Panc1 (cell line): ENCODE measurements at regions of chrX and their contacts with region 1.

Region 1: GRCh38 chrX:131746474-131746968 is 202.6 kb downstream of the OR13H1 start:
- DNase-seq: peak; percentile 91
- ATAC-seq: peak; percentile 90
- H3K4me3 ChIP-seq: peak overlapping the region; percentile 69 to 97
- H3K27ac ChIP-seq: peak overlapping the region; percentile 99
- H3K4me1 ChIP-seq: peaks cover 7% of the 10 kb centered on the region; the same call in 1 of the 2 replicates
- H3K27me3 ChIP-seq: no peaks in the 10 kb centered on the region
- CTCF ChIP-seq: no peak

Region 2: GRCh38 chrX:131704136-131704695 is 42.3 kb before region 1 on chrX:
- CTCF ChIA-PET with region 1: no interaction called
- POLR2A ChIA-PET with region 1: no interaction called
- in situ Hi-C with region 1: no loop called
- intact Hi-C with region 1: loop called (anchors 1 kb)
- DNase-seq: peak; percentile 88
- ATAC-seq: peak; percentile 95
- H3K4me3 ChIP-seq: peak overlapping the region; percentile 77 to 83
- H3K27ac ChIP-seq: peak overlapping the region; percentile 76
- H3K4me1 ChIP-seq: peaks cover 16% of the 10 kb centered on the region
- H3K27me3 ChIP-seq: no peaks in the 10 kb centered on the region
- CTCF ChIP-seq: peak; percentile 64

Region 3: DNA sequence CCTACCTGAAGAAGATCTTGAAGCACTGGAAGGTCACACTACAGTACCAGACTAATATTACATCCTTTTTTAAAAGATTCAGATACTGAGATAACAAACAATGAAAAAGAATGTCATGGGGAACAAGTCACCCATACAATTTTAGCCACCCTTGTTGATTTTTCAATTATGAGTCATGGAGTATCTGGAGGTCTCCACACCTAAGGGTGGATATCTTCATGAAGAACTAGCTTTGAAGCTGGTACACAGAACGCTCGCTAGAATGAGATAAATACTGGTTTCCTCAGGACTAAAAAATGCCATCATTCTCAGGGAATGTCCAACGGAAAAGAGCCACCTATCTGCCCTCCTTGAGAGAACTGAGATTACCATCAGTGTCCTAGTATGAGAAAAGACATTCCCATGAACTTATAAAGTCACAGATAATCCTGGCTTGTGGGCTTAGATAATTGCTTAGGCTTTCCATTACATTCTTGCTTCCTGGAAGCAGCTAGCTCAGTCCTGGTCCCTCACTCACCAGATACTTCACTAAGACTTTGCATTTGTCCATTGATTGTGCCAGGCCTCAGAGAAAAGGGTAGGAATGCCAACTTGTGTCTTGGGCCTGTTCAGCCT is 36.0 kb before region 1 on chrX:
- CTCF ChIA-PET with region 1: interaction called, 5 read pairs
- POLR2A ChIA-PET with region 1: no interaction called
- in situ Hi-C with region 1: no loop called
- intact Hi-C with region 1: loop called (anchors 1 kb)
- DNase-seq: no peak
- ATAC-seq: peak; percentile 63
- H3K4me3 ChIP-seq: peak overlapping the region in 1 of 2 experiments; percentile 64; a peak in 3 of 4 replicates
- H3K27ac ChIP-seq: peak overlapping the region; percentile 81; the same call in 1 of the 2 replicates
- H3K4me1 ChIP-seq: peaks cover 9% of the 10 kb centered on the region; the same call in 1 of the 2 replicates
- H3K27me3 ChIP-seq: no peaks in the 10 kb centered on the region
- CTCF ChIP-seq: no peak

Region 4: DNA sequence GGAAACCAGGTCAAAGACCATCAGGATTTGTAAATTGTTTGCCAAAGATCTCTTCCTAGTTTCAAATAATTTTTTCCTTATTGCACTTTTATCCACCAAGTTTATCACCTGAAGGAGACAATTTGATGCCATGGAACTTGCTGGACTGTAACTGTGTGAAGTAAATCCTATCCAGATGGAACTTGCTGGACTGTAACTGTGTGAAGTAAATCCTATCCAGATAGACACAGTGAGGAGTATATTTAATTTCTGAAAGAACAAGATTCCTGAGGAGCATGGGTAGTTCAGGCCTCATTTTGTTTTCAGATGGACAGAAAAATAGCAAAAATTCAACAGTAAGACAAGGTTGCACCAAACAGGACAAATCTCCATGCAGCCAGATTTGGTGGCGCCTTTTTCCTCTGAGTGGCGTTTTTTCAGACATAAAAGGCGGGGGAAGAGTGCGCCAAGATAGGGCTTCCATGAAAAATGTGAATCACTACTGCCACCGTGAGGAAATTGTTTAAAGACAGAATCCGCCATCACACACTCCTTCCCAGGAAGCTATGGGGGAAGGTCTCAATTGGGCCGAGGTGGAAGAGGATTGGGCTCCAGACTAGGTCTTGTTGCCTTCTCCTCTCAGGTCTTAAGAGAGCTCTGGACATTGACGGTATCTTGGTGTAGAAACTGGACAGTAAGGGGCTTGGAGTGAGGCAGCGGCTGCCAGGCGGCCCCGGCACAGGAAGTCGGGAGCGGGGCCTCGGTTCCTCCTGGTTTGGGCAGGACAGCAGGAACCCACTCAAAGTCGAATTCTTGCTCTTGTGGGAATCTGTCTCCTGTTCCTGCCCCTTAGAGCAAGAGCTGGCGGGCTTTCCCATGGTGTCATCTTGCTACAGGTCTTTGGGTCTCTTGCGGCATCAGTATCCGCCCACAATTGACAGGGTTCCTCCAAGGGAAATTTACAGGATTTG is 32.0 kb after region 1 on chrX:
- CTCF ChIA-PET with region 1: interaction called, 3 read pairs
- POLR2A ChIA-PET with region 1: no interaction called
- in situ Hi-C with region 1: no loop called
- intact Hi-C with region 1: loop called (anchors 2 kb)
- DNase-seq: no peak
- ATAC-seq: peak; percentile 97
- H3K4me3 ChIP-seq: peak overlapping the region; percentile 42 to 57
- H3K27ac ChIP-seq: peak overlapping the region; percentile 96
- H3K4me1 ChIP-seq: peaks cover 8% of the 10 kb centered on the region
- H3K27me3 ChIP-seq: no peaks in the 10 kb centered on the region
- CTCF ChIP-seq: peak; percentile 72

Region 5: DNA sequence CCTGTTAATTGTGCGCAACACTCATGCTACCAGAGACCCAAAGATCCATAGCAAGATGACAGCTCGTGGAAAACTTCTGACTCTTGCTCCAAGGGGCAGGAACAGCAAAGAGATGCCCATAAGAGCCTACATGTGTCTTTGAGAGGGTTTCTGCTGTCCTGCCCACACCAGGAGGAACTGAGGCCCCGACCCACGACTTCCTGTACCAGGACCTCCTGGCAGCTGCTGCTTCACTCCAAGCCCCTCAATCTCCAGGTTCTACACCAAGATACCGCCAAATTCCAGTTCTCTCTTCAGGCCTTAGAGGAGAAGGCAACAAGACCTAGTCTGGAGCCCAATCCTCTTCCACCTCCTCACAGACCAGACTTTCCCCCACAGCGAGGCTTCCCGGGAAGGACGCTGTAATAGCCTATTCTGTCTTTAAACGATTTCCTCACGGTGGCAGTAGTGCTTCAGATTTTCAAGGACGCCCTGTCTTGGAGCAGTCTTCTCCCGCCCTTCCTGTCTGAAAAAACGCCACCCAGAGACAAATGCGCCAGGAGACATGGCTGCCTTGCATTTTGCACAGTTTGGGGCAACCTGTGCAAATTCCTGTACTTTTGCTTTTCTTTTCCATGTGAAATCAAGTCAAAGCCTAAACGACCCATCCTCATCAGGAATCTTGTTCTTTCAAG is 46.4 kb after region 1 on chrX:
- CTCF ChIA-PET with region 1: no interaction called
- POLR2A ChIA-PET with region 1: no interaction called
- in situ Hi-C with region 1: no loop called
- intact Hi-C with region 1: loop called (anchors 2 kb)
- DNase-seq: peak; percentile 92
- ATAC-seq: peak; percentile 94
- H3K4me3 ChIP-seq: peak overlapping the region; percentile 57 to 78
- H3K27ac ChIP-seq: peak overlapping the region; percentile 98
- H3K4me1 ChIP-seq: peaks cover 6% of the 10 kb centered on the region
- H3K27me3 ChIP-seq: no peaks in the 10 kb centered on the region
- CTCF ChIP-seq: peak; percentile 60

Region 6: DNA sequence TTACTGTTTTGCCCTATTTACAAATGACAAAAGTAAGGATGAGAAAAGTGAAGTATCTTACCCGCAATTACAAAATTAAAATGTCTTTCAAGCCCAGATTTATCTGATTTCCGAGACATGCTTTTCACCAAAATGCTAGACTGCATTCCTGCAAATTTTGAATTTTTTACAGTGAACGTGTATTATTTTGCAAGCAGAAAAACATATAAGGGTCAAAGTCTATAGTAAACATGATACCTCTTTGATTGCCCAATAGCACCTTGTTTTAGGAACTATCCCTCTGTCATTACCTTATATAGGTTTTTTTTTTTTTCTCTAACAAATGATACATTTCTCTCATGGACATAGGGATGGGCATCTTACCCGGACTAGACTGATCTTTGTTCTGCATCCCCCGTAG is 606.9 kb after region 1 on chrX:
- CTCF ChIA-PET with region 1: no interaction called
- POLR2A ChIA-PET with region 1: no interaction called
- in situ Hi-C with region 1: no loop called
- intact Hi-C with region 1: loop called (anchors 5 kb)
- DNase-seq: no peak
- ATAC-seq: no peak
- H3K4me3 ChIP-seq: no peak overlapping the region
- H3K27ac ChIP-seq: no peak overlapping the region
- H3K4me1 ChIP-seq: no peaks in the 10 kb centered on the region
- H3K27me3 ChIP-seq: no peaks in the 10 kb centered on the region
- CTCF ChIP-seq: no peak